Activated CD8-positive, alpha-beta T cell treated with anti-CD3 and anti-CD28 coated beads, Interleukin-2, amount 10 ng/mL, durations not matched to agents 7 days and 5 days (primary cell): ENCODE measurements at regions of chr5 and their contacts with region 1.

Region 1: DNA sequence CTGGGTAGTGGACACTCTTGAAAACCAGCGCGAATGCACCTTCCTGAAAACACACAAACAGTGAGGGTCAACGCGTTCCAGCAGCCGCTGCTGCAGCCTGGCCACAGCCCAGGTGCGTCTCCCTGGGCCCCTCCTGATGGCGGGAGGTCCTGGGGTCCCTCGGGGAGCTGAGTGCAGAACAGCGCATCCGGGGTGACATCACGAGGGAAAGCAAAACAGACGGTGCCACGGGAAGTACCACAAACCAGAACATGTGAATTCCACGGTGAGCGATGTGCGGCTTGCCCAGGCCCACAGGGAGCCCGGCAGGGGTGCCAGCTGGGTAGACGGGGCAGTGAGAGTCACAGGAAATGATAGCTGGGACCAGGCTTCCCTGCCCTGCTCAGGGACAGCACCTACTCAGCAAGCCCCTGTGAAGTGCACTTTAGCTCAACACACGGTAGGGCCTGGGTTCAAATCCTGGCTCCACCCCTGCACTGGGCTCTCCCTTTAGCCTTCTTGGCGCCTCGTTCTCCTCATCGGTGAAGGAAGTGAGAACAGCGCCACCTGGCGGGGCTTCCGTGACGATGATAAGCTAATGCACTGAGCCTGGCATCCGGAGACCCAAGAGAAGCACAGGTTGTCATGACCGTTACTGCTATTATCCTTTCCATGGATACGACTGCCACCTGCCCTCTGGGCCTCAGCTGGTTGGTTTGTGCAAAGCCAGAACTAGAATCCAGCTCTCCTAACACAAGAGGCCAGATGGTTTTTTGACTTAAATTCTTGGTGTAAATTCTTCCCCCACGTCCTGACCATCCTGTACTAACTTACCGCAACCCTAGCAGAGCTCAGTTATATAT is 24.6 kb downstream of the GFPT2 start:
- DNase-seq: peak; percentile 87
- ATAC-seq: peak; percentile 94
- H3K4me3 Mint-ChIP-seq: no peak overlapping the region
- H3K27ac Mint-ChIP-seq: no peak overlapping the region
- H3K4me1 Mint-ChIP-seq: peaks cover 3% of the 10 kb centered on the region
- H3K27me3 Mint-ChIP-seq: peaks cover 13% of the 10 kb centered on the region

Region 2: GRCh38 chr5:180007582-180007981 is 320.9 kb before region 1 on chr5:
- CTCF ChIA-PET with region 1: no interaction called
- POLR2A ChIA-PET with region 1: no interaction called
- DNase-seq: no peak
- ATAC-seq: no peak
- H3K4me3 Mint-ChIP-seq: no peak overlapping the region
- H3K27ac Mint-ChIP-seq: peak overlapping the region; percentile 50
- H3K4me1 Mint-ChIP-seq: peaks cover 31% of the 10 kb centered on the region
- H3K27me3 Mint-ChIP-seq: no peaks in the 10 kb centered on the region

Region 3: GRCh38 chr5:180291943-180292831 is 36.3 kb before region 1 on chr5 and contains the start of gene MAPK9:
- CTCF ChIA-PET with region 1: interaction called, 52 read pairs
- POLR2A ChIA-PET with region 1: no interaction called
- DNase-seq: peak; percentile 85
- ATAC-seq: peak; percentile 87
- H3K4me3 Mint-ChIP-seq: peak within 1 kb of the TSS; percentile 90
- H3K27ac Mint-ChIP-seq: peak within 1 kb of the TSS; percentile 98
- H3K4me1 Mint-ChIP-seq: peaks cover 37% of the 10 kb centered on the region
- H3K27me3 Mint-ChIP-seq: no peaks in the 10 kb centered on the region
- total RNA-seq, gene MAPK9: 42.6 to 44.6 TPM

Region 4: DNA sequence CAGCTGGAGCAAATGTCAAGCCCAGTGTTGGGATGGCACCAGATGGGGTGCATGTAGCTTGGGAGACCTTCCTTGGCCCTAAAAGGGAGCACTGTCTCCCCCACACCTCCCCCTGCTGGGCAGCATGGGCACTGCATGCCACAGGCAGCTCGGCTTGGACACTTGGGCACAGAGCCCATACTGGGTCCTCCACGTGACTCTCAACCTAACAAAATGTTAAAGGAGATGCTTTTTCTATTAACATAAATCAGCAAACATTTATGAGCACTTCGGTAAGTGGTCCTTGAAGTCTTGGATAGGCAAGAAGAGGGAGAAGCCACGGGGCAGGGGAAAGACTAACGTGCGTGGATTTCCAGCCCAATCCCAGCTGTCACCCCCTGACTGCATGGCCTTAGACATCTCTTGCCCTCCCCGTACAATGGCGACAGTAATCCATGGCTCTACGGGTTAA is 12.7 kb before region 1 on chr5:
- CTCF ChIA-PET with region 1: interaction called, 65 read pairs
- POLR2A ChIA-PET with region 1: no interaction called
- DNase-seq: peak; percentile 72
- ATAC-seq: peak; percentile 74
- H3K4me3 Mint-ChIP-seq: no peak overlapping the region
- H3K27ac Mint-ChIP-seq: no peak overlapping the region
- H3K4me1 Mint-ChIP-seq: no peaks in the 10 kb centered on the region
- H3K27me3 Mint-ChIP-seq: no peaks in the 10 kb centered on the region

Region 5: GRCh38 chr5:180343831-180344327 is 15.4 kb after region 1 on chr5:
- CTCF ChIA-PET with region 1: interaction called, 11 read pairs
- POLR2A ChIA-PET with region 1: no interaction called
- DNase-seq: no peak
- ATAC-seq: no peak
- H3K4me3 Mint-ChIP-seq: no peak overlapping the region
- H3K27ac Mint-ChIP-seq: no peak overlapping the region
- H3K4me1 Mint-ChIP-seq: no peaks in the 10 kb centered on the region
- H3K27me3 Mint-ChIP-seq: peaks cover 7% of the 10 kb centered on the region

Region 6: GRCh38 chr5:180352116-180353047 is 23.9 kb after region 1 on chr5:
- CTCF ChIA-PET with region 1: interaction called, 10 read pairs
- POLR2A ChIA-PET with region 1: no interaction called
- DNase-seq: no peak
- ATAC-seq: peak; percentile 3
- H3K4me3 Mint-ChIP-seq: peak overlapping the region; percentile 42
- H3K27ac Mint-ChIP-seq: no peak overlapping the region
- H3K4me1 Mint-ChIP-seq: peaks cover 6% of the 10 kb centered on the region
- H3K27me3 Mint-ChIP-seq: peaks cover 46% of the 10 kb centered on the region

Region 7: DNA sequence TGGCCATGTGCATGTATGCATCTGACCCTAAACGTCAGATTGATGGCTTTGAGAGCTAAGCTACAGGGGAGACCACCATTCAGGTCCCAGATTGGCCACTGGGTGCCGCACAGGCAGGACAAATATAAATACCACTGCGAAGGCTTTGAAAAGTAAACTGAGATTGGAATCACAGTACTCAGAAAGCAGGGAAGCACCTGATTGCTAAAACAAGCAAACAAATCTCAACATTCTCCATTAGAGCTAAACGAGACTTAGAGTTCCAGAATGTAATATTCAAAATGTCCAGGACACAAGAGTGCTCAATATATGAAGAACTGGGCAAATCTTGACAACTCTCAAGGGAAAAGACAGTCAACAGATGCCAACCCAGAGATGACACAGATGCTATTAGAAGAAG is 85.7 kb after region 1 on chr5:
- CTCF ChIA-PET with region 1: no interaction called
- POLR2A ChIA-PET with region 1: no interaction called
- DNase-seq: no peak
- ATAC-seq: no peak
- H3K4me3 Mint-ChIP-seq: no peak overlapping the region
- H3K27ac Mint-ChIP-seq: no peak overlapping the region
- H3K4me1 Mint-ChIP-seq: no peaks in the 10 kb centered on the region
- H3K27me3 Mint-ChIP-seq: peaks cover 2% of the 10 kb centered on the region

Region 8: DNA sequence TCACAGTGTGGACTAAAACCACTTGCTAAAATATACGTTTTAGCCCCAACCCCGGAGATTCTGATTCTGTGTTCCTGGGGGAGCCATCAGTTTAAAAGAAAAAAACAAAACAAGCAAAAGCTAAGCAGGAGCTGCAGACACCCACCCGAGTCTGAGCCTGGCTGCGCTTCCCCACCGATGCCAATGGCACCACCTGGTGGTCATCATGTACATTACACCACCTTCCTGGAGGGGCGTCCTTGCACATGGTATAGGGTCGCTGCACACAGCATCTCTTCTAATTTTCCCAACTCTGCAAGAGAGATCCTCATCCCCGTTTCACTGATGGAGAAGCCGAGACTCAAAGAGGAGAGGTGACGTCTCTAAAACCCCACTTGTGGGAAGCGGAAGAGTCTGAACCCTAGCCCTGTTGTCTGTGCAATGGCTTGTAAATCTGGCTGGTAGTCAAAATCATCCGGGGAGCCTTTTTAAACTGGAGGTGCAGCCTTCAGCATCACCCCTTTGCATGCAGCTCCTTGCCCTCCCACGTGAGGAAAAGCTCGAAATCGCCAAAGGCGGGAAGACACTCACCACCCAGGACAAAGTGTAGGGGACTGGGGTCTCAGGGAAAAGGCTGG is 142.6 kb after region 1 on chr5:
- CTCF ChIA-PET with region 1: interaction called, 10 read pairs
- POLR2A ChIA-PET with region 1: no interaction called
- DNase-seq: peak; percentile 66
- ATAC-seq: peak; percentile 80
- H3K4me3 Mint-ChIP-seq: no peak overlapping the region
- H3K27ac Mint-ChIP-seq: no peak overlapping the region
- H3K4me1 Mint-ChIP-seq: no peaks in the 10 kb centered on the region
- H3K27me3 Mint-ChIP-seq: peaks cover 4% of the 10 kb centered on the region